HEK293 (cell line): ENCODE measurements at regions of chr2 and their contacts with region 1.

Region 1: GRCh38 chr2:164717000-164717803 is 95.9 kb upstream of the GRB14 start:
- H3K4me3 ChIP-seq: no peak overlapping the region
- H3K27ac ChIP-seq: no peak overlapping the region
- H3K4me1 ChIP-seq: no peaks in the 10 kb centered on the region
- CTCF ChIP-seq: no peak

Region 2: DNA sequence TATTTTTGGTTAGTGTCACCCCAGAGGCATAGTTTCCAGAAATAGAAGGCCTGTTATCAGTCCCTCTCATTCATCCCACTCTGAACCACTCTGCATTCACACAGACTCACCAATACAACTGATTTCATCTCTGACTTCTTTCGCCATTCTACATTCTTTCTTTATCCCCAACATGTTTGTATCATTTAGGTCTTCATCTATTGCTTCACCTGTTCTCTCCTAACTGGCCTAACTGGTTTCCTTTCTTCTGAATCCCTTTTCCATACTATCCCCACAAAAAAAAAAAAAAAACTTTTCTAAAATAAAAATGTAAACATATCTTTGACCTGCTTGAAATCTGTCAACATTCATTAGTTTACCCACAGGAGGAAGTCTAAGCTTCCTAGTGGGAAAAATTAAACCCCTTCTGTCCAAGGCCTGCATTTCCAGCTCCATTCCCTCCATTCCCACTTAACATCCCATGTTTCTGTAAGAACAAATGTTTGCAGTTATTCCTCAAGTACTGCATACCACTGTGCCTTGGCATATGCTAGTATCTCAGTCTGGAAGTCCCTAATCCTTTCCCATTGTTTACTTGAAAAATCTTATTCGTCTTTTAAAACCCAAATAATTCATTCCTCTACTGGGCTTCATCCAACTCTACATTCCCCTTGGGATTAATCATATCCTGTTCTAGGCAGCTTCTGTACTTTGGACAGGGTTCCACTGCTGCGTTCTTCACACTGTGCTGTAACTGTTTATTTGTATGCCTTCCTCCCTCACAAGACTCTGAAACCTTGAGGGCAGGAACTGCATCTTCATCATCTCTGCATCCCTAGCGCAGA is 1049.9 kb before region 1 on chr2:
- CTCF ChIA-PET with region 1: interaction called, 10 read pairs
- POLR2A ChIA-PET with region 1: no interaction called
- H3K4me3 ChIP-seq: no peak overlapping the region
- H3K27ac ChIP-seq: no peak overlapping the region
- H3K4me1 ChIP-seq: peaks cover 5% of the 10 kb centered on the region
- CTCF ChIP-seq: no peak

Region 3: DNA sequence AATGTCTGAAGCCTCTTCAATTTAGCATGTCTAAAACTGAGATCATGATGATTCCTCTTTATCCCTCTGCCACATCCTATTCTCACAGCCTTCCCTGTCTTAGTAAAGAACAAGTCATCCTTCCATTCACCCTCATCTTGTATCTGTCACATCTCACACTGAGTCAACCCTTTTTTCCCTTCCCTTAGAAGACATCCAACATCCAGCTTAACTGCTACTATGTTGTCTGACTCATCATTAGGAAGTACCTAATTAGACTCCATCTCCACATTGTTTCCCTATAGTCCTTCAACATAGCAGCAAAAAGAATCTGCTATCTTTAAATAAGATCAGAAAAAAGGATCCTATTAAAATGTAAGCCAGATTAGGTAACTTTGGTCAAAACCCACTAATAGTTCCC is 10.7 kb before region 1 on chr2:
- CTCF ChIA-PET with region 1: interaction called, 13 read pairs
- POLR2A ChIA-PET with region 1: no interaction called
- H3K4me3 ChIP-seq: no peak overlapping the region
- H3K27ac ChIP-seq: no peak overlapping the region
- H3K4me1 ChIP-seq: no peaks in the 10 kb centered on the region
- CTCF ChIP-seq: no peak